Right ventricle myocardium inferior (tissue), 1 donor: ENCODE measurements at regions of chr3 and their contacts with region 1.

Region 1: DNA sequence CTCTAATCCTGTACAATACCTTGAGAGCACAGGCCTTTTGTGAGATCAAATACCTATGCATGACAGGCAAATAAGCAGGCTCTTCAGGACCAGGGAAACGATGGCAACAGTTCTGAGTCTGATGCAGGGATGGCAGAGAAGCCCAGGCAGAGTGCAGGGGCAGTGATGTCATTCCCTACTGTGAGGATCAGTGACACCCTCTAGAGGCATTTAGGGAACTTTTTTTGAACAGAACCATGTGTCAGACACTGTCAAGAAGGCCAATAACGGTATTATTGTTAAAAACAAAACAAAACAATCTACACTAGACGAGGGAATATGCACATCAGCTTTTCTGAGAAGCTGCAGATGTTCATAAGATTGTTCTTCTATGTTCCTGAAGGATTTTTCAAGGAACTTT is 314.8 kb upstream of the CTDSPL start:
- DNase-seq: no peak
- ATAC-seq: peak; percentile 78

Region 2: DNA sequence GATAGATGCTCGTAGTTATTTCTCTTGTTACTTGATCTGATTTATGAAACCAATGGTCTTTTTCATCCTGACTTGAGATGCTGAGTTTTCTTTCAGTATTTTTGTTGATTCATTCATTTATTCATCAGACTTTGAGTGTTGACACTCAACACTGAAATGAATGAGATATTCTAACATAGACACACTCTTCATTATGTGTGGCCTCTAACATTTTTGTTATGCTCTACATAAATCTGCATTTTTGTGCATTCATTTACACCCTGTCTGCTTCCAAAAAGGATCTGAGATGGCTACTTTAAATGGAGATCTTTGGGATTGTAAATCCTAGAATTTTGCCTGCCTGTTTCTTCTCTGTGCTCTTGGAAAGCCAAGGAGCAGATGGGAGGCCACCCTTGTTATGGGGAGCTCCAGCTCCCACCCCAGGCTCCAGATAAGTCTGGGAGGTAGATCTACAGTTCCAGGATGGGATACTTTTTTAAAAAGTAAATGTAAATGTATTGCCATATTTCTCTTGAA is 85.4 kb before region 1 on chr3:
- intact Hi-C with region 1: no loop called
- DNase-seq: no peak
- ATAC-seq: no peak

Region 3: DNA sequence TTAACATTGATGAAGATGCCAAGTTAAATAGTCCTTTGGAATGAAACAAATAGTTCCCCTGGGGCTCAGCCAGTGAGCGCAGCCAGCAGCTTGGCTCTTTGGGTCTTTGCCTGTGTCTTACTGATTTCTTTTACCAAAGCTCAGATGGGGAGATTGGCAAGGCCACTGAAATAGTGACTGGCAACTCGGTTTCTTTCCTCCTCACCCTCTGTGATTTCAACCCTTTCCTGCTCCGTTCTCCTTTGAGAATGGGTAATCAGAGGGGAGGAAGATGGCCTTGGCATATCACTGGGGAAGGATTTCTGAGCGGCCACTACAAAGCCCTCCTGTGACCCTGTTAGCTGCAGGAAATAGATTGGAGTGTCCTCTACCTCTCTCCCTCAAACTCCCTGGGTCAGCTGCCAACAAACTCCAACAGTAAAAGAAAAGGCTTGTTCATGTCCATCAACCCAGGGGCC is 35.4 kb before region 1 on chr3:
- intact Hi-C with region 1: loop called (anchors 1 kb)
- DNase-seq: no peak
- ATAC-seq: peak; percentile 53

Region 4: GRCh38 chr3:37741644-37742043 is 194.7 kb after region 1 on chr3:
- intact Hi-C with region 1: loop called (anchors 2 kb)
- DNase-seq: peak; percentile 71
- ATAC-seq: peak; percentile 64